Common myeloid progenitor, CD34-positive (primary cell): ENCODE measurements at regions of chr2 and their contacts with region 1.

Region 1: GRCh38 chr2:224401641-224402342 is at the start of gene FAM124B:
- DNase-seq: peak; percentile 94 to 99 (median 98)
- H3K4me3 ChIP-seq: peak within 1 kb of the TSS; percentile 59 to 97 (median 88)
- H3K27ac ChIP-seq: peak within 1 kb of the TSS; percentile 92 to 96
- H3K4me1 ChIP-seq: peaks cover 30 to 76% (median 47%) of the 10 kb centered on the region in 4 experiments
- H3K27me3 ChIP-seq: no peaks in the 10 kb centered on the region

Region 2: DNA sequence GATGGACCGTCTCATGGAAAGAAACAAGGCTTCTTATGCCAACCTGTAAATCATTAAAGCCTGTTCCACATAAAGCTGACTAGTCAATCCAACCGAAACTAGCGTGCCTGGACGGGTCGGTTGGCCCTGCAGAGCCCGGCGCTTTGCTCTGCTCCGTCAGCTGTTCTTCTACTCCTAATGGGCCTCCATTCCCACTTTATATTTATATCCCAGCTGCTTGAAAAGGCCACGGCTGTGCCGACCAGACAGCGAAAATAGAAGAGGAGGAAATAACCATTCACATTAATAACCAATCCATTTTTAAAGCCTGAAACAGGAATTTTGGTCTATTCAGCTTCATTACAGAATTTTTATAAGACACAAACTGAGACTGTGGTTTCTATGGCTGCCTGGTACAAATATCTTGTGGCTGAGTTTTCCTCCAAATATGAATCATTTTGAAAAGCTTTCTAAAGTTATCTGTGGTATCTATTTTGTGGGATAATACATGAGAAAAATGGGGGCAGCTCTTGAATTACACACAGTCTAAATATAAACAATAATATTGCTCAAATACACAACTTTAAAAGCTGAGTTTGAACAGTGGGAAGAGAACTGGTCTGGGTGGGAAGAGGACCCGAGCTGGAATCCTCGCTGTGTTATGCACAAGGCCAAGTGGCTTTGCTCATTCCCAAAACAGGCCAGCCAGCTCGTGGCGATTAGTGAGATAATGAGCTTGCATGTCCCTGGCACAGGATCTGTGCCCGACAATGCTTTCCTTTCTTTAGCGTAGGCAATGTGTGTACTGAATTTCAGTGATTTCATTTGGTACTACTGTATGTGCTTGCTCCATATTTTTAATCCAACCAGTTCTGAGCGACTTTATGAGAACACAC is 10.6 kb after region 1 on chr2:
- CTCF ChIA-PET with region 1: interaction called, 28 read pairs
- POLR2A ChIA-PET with region 1: no interaction called
- DNase-seq: no peak
- H3K4me3 ChIP-seq: no peak overlapping the region
- H3K27ac ChIP-seq: no peak overlapping the region
- H3K4me1 ChIP-seq: peaks cover 4 to 20% (median 9%) of the 10 kb centered on the region in 4 experiments
- H3K27me3 ChIP-seq: no peaks in the 10 kb centered on the region

Region 3: DNA sequence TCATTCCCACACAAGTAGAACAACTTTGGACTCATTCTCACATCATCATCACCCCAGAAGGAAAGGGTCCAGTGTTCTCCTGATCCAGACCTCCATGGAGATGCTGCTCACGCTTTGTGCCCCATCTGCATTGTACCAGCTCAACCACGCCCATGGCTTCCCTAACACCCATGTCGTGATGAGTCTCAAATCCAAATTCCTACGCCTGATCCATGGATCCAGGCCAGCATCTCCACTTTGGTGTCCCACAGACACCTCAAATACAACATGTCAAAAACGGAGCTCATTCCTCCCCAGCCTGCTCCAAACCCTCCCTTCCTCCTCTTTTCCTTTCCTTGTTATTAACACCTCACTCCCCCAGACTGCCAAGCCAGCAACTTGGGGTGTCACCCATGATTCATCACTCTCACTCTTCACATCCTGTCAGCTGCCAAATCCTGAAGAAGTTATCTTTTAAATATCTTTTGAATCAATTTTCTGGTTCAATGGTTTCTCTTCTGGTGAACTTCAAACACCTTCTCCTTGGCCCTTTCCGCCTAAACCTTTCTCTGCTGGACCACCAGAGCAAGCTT is 30.3 kb after region 1 on chr2:
- CTCF ChIA-PET with region 1: interaction called, 20 read pairs
- POLR2A ChIA-PET with region 1: no interaction called
- DNase-seq: no peak
- H3K4me3 ChIP-seq: no peak overlapping the region
- H3K27ac ChIP-seq: no peak overlapping the region
- H3K4me1 ChIP-seq: peaks cover 0 to 20% (median 16%) of the 10 kb centered on the region in 4 experiments
- H3K27me3 ChIP-seq: no peaks in the 10 kb centered on the region

Region 4: DNA sequence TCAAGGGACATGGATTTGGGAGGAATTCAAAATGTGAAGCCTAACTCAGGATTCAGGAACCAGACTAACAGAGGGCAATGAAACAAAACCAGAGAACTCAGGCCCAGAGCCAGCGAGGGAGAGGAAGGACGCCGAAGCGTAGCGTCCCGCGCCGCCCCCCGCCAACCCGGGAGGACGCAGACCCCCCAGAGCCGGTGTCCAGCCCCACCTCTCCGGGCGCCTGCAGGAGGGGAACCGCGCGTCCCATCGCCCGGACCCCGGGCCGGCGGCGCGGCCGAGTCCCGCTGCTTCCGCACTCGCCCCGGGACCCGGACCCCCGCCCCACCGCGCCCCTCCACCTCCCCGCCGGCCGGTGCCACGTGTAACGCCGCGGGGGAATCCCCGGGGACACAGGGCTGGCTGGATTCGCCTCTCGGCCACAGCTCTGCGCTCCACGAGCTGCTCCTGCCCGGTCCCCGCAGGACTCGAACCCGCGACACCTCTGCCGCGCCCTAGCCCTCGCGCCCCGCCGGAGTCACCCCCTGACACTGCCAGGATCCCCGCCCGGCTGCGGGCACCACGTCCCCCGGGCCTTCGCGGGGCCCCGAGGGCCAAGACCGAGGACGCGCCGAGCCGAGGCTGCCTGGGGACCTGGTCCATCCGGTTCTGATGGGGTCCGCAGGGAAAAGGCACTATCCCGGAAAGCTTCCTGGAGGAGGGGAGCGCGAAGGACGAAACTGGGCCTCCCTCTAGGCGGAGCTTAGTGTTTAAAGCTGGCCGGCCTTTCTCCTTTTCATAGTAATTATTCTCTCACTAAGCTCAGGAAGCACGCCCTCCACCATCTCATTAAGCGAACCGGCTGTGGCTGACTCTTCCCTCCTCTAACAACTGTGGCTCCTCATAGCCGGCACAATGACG is 40.5 kb after region 1 on chr2:
- CTCF ChIA-PET with region 1: interaction called, 25 read pairs
- POLR2A ChIA-PET with region 1: interaction called, 10 read pairs
- DNase-seq: peak; percentile 36 to 71 (median 62)
- H3K4me3 ChIP-seq: peak overlapping the region; percentile 42 to 82 (median 69)
- H3K27ac ChIP-seq: no peak overlapping the region
- H3K4me1 ChIP-seq: peaks cover 0 to 10% (median 7%) of the 10 kb centered on the region in 4 experiments
- H3K27me3 ChIP-seq: no peaks in the 10 kb centered on the region

Region 5: GRCh38 chr2:224449212-224450147 is 47.7 kb after region 1 on chr2:
- CTCF ChIA-PET with region 1: interaction called, 18 read pairs
- POLR2A ChIA-PET with region 1: interaction called, 3 read pairs
- DNase-seq: peak; percentile 57 to 79 (median 75)
- H3K4me3 ChIP-seq: no peak overlapping the region
- H3K27ac ChIP-seq: no peak overlapping the region
- H3K4me1 ChIP-seq: no peaks in the 10 kb centered on the region
- H3K27me3 ChIP-seq: no peaks in the 10 kb centered on the region